ENCODE measurements at regions of chr3 and their contacts with region 1.

Region 1: GRCh38 chr3:161274719-161275298 is 53.7 kb downstream of the NMD3 start:
- DNase-seq: peak; percentile 28 to 47 (median 46)
- H3K4me3 ChIP-seq: no peak overlapping the region
- H3K4me3 Mint-ChIP-seq: no peak overlapping the region
- H3K27ac ChIP-seq: no peak overlapping the region
- H3K27ac Mint-ChIP-seq: no peak overlapping the region
- H3K4me1 ChIP-seq: no peaks in the 10 kb centered on the region
- H3K4me1 Mint-ChIP-seq: no peaks in the 10 kb centered on the region
- H3K27me3 ChIP-seq: no peaks in the 10 kb centered on the region
- H3K27me3 Mint-ChIP-seq: peaks cover 0 to 2% (median 0%) of the 10 kb centered on the region in 3 donors
- CTCF ChIP-seq: peak; percentile 83

Region 2: GRCh38 chr3:159739886-159740453 is 1534.8 kb before region 1 on chr3:
- intact Hi-C with region 1: no loop called
- DNase-seq: no peak
- H3K4me3 ChIP-seq: no peak overlapping the region
- H3K4me3 Mint-ChIP-seq: no peak overlapping the region
- H3K27ac ChIP-seq: no peak overlapping the region
- H3K27ac Mint-ChIP-seq: no peak overlapping the region
- H3K4me1 ChIP-seq: no peaks in the 10 kb centered on the region
- H3K4me1 Mint-ChIP-seq: no peaks in the 10 kb centered on the region
- H3K27me3 ChIP-seq: no peaks in the 10 kb centered on the region
- H3K27me3 Mint-ChIP-seq: peaks cover 0 to 3% (median 2%) of the 10 kb centered on the region in 3 donors
- CTCF ChIP-seq: no peak

Region 3: GRCh38 chr3:160707187-160707794 is 567.5 kb before region 1 on chr3:
- intact Hi-C with region 1: loop called in 1 of 2 experiments (anchors 10 kb)
- DNase-seq: peak; percentile 22 to 40 (median 32)
- H3K4me3 ChIP-seq: no peak overlapping the region
- H3K4me3 Mint-ChIP-seq: no peak overlapping the region
- H3K27ac ChIP-seq: no peak overlapping the region
- H3K27ac Mint-ChIP-seq: no peak overlapping the region
- H3K4me1 ChIP-seq: no peaks in the 10 kb centered on the region
- H3K4me1 Mint-ChIP-seq: no peaks in the 10 kb centered on the region
- H3K27me3 ChIP-seq: peaks cover 0 to 2% of the 10 kb centered on the region in 2 donors
- H3K27me3 Mint-ChIP-seq: peaks cover 5 to 10% (median 5%) of the 10 kb centered on the region in 3 donors
- CTCF ChIP-seq: peak; percentile 61

Region 4: DNA sequence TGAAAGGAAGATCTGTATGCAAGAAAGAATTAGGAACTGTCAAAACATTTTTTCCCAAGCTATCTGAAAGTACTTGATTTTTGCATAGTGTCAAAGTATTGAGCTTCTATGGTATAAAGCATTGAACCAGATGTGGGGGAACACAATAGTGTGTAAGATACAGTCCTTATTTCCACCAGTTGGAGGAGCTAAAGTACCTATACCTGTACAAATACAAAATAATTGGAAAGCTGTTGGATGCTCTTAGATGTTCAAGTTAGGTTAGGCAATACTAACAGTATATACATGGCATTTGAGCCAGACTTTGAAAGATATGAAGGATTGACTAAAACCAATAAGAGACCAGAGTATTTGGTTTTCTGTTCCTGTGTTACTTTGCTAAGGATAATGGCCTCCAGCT is 318.0 kb before region 1 on chr3:
- intact Hi-C with region 1: loop called in 1 of 2 experiments (anchors 10 kb)
- DNase-seq: peak; percentile 21 to 55 (median 40)
- H3K4me3 ChIP-seq: no peak overlapping the region
- H3K4me3 Mint-ChIP-seq: no peak overlapping the region
- H3K27ac ChIP-seq: no peak overlapping the region
- H3K27ac Mint-ChIP-seq: no peak overlapping the region
- H3K4me1 ChIP-seq: no peaks in the 10 kb centered on the region
- H3K4me1 Mint-ChIP-seq: no peaks in the 10 kb centered on the region
- H3K27me3 ChIP-seq: no peaks in the 10 kb centered on the region
- H3K27me3 Mint-ChIP-seq: no peaks in the 10 kb centered on the region
- CTCF ChIP-seq: peak; percentile 78

Region 5: DNA sequence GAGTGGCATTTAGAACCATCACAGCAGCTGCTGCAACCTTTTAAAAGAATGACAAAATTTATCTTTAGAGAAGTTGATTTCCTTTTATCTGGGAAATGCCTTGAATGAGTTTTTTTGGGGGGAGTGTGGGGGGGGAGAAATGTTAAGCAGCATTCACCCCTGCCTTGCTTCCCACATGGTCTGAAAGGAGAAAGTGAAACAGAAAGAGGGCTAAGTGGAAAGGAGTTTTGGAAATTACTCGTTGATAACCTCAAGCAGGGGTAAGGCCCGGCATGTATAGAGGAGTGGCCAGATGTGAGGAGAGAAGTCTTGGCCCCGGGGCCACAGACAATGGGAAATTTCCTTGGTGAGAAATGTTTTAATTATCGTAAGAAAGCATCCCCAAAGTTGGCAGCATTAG is 193.2 kb before region 1 on chr3:
- intact Hi-C with region 1: no loop called
- DNase-seq: no peak
- H3K4me3 ChIP-seq: peak overlapping the region in 2 of 3 experiments; percentile 36 to 56
- H3K4me3 Mint-ChIP-seq: peak overlapping the region; percentile 67 to 79
- H3K27ac ChIP-seq: peak overlapping the region in 1 of 2 donors; percentile 55
- H3K27ac Mint-ChIP-seq: peak overlapping the region in 6 of 7 donors; percentile 75 to 89 (median 82)
- H3K4me1 ChIP-seq: peaks cover 14 to 24% of the 10 kb centered on the region in 2 donors
- H3K4me1 Mint-ChIP-seq: peaks cover 21% of the 10 kb centered on the region
- H3K27me3 ChIP-seq: no peaks in the 10 kb centered on the region
- H3K27me3 Mint-ChIP-seq: peaks cover 0 to 1% (median 0%) of the 10 kb centered on the region in 3 donors
- CTCF ChIP-seq: no peak

Region 6: DNA sequence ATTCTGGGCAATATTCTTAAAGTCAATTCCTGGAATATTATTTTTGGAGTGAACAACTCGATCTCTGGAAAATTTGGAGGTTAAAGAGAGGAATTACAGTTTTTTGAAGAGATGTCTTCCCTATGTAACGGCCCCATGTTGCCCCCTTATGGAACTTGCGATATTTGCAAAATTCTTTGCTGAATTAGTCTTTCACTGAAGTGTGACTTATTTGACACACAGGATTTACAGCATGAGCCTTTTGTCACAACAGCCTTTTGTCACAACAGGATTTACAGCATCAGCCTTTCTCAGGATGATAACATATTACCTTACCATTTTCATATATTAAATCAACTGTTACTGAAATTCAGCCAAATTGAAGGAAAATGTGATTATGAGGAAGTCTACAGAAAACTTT is 134.3 kb after region 1 on chr3:
- intact Hi-C with region 1: loop called in 1 of 2 experiments (anchors 5 kb)
- DNase-seq: peak in 2 of 3 donors; percentile 30 to 42
- H3K4me3 ChIP-seq: no peak overlapping the region
- H3K4me3 Mint-ChIP-seq: no peak overlapping the region
- H3K27ac ChIP-seq: no peak overlapping the region
- H3K27ac Mint-ChIP-seq: no peak overlapping the region
- H3K4me1 ChIP-seq: no peaks in the 10 kb centered on the region
- H3K4me1 Mint-ChIP-seq: peaks cover 1% of the 10 kb centered on the region
- H3K27me3 ChIP-seq: no peaks in the 10 kb centered on the region
- H3K27me3 Mint-ChIP-seq: peaks cover 2% of the 10 kb centered on the region in 3 donors
- CTCF ChIP-seq: peak; percentile 76

Region 7: DNA sequence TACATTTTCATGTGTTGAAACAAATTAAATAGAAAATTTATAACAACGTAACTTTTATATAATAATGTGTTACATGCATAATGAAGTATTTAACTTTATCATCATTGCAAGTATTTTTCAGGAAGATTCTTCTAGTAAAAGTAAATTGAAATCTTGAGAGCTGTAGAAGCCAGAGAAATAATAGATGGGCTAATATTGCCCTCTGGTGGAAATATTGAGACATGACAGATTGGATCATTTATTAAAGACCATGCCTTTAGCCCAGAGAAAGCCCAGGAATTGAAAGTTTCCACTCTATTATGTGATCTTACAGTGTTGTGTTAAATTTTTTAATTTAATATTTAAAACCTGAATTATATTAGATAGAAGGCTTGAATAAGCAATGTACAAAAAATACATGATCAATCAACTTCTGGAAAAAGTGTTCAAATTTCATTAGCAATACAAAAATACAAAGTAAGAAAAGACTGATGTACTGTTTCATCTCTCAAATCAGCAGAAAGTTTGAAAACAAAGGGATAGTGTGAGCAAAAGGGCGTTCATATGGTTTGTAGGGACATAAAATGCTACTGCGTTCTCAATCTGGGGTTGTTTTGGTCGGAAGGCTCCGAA is 149.2 kb after region 1 on chr3:
- intact Hi-C with region 1: loop called (anchors 2 to 5 kb)
- DNase-seq: peak; percentile 18 to 60 (median 28)
- H3K4me3 ChIP-seq: no peak overlapping the region
- H3K4me3 Mint-ChIP-seq: no peak overlapping the region
- H3K27ac ChIP-seq: no peak overlapping the region
- H3K27ac Mint-ChIP-seq: no peak overlapping the region
- H3K4me1 ChIP-seq: no peaks in the 10 kb centered on the region
- H3K4me1 Mint-ChIP-seq: no peaks in the 10 kb centered on the region
- H3K27me3 ChIP-seq: no peaks in the 10 kb centered on the region
- H3K27me3 Mint-ChIP-seq: peaks cover 0 to 2% (median 0%) of the 10 kb centered on the region in 3 donors
- CTCF ChIP-seq: peak; percentile 83

Region 8: GRCh38 chr3:161682715-161683114 is 407.9 kb after region 1 on chr3:
- intact Hi-C with region 1: no loop called
- DNase-seq: no peak
- H3K4me3 ChIP-seq: no peak overlapping the region
- H3K4me3 Mint-ChIP-seq: no peak overlapping the region
- H3K27ac ChIP-seq: no peak overlapping the region
- H3K27ac Mint-ChIP-seq: no peak overlapping the region
- H3K4me1 ChIP-seq: no peaks in the 10 kb centered on the region
- H3K4me1 Mint-ChIP-seq: peaks cover 7% of the 10 kb centered on the region
- H3K27me3 ChIP-seq: no peaks in the 10 kb centered on the region
- H3K27me3 Mint-ChIP-seq: no peaks in the 10 kb centered on the region
- CTCF ChIP-seq: no peak